CD8-positive, alpha-beta T cell (primary cell): ENCODE measurements at regions of chr2 and their contacts with region 1.

Region 1: GRCh38 chr2:72028996-72029395 is 118.7 kb downstream of the CYP26B1 start:
- DNase-seq: peak in 1 of 9 experiments; percentile 32
- ATAC-seq: no peak
- H3K4me3 ChIP-seq: no peak overlapping the region
- H3K4me3 Mint-ChIP-seq: no peak overlapping the region
- H3K27ac ChIP-seq: no peak overlapping the region
- H3K27ac Mint-ChIP-seq: no peak overlapping the region
- H3K4me1 ChIP-seq: no peaks in the 10 kb centered on the region
- H3K4me1 Mint-ChIP-seq: no peaks in the 10 kb centered on the region
- H3K27me3 ChIP-seq: no peaks in the 10 kb centered on the region
- H3K27me3 Mint-ChIP-seq: peaks cover 7% of the 10 kb centered on the region
- CTCF ChIP-seq: no peak

Region 2: GRCh38 chr2:71989671-71990070 is 39.3 kb before region 1 on chr2:
- CTCF ChIA-PET with region 1: no interaction called
- POLR2A ChIA-PET with region 1: no interaction called
- intact Hi-C with region 1: loop called in 1 of 2 experiments (anchors 1 kb)
- DNase-seq: no peak
- ATAC-seq: no peak
- H3K4me3 ChIP-seq: no peak overlapping the region
- H3K4me3 Mint-ChIP-seq: no peak overlapping the region
- H3K27ac ChIP-seq: no peak overlapping the region
- H3K27ac Mint-ChIP-seq: no peak overlapping the region
- H3K4me1 ChIP-seq: no peaks in the 10 kb centered on the region
- H3K4me1 Mint-ChIP-seq: no peaks in the 10 kb centered on the region
- H3K27me3 ChIP-seq: no peaks in the 10 kb centered on the region
- H3K27me3 Mint-ChIP-seq: no peaks in the 10 kb centered on the region
- CTCF ChIP-seq: no peak